Common myeloid progenitor, CD34-positive (primary cell): ENCODE measurements at regions of chr2 and their contacts with region 1.

Region 1: GRCh38 chr2:207166039-207166348 is 246 bp upstream of the KLF7 start:
- DNase-seq: peak; percentile 99 to 100 (median 100)
- H3K4me3 ChIP-seq: peak overlapping the region; percentile 78 to 94 (median 85)
- H3K27ac ChIP-seq: peak overlapping the region; percentile 93 to 99
- H3K4me1 ChIP-seq: peaks cover 39 to 59% (median 43%) of the 10 kb centered on the region in 4 experiments
- H3K27me3 ChIP-seq: no peaks in the 10 kb centered on the region

Region 2: DNA sequence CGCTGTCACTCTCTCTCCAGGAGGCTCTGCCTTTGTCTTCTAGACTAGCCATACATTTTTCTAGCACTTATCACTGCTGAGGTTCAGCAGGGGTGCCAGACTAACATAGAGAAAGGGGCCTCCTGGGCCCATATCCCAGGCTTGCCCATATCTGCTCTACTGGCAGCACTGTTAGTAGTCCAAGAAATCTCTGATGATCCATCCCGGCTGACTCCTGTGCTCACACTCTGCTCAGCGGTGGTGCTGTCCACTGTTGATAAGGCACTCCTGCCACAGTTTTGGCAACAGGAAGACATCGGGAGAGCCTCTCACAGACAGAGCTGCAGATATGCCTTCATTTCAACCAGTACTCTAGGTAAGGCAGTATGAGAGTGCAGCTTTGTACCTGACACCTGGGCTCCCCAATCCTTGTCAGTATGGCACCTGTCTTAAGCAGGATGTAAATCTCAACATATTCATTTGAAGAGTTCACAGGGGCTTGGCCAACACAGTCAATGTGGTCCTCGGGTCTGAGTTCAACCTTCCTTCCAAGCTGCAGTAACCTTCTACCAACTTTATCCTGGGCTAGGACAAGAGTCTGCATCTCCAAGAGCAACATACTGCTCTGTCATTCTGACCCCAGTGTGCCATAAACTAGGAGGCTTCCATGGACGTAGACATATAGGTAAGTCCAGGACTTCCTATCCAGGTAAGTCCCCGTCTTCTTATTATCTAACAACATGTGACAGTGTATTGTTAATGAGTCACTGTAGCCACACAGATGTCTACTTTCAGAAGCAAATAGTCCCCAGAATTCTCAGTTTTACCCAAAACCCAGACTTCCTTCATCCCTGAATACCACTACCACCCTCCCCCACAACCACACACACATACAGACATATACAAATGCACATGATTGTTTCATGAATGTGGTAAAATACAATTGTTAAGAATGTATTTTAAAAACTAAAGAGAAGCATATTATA is 16.5 kb before region 1 on chr2:
- CTCF ChIA-PET with region 1: interaction called, 12 read pairs
- POLR2A ChIA-PET with region 1: interaction called, 49 read pairs
- DNase-seq: peak in 2 of 3 donors; percentile 49 to 68
- H3K4me3 ChIP-seq: peak overlapping the region in 2 of 7 experiments; percentile 52 to 67
- H3K27ac ChIP-seq: peak overlapping the region; percentile 9 to 23
- H3K4me1 ChIP-seq: peaks cover 36 to 78% (median 63%) of the 10 kb centered on the region in 4 experiments
- H3K27me3 ChIP-seq: no peaks in the 10 kb centered on the region

Region 3: DNA sequence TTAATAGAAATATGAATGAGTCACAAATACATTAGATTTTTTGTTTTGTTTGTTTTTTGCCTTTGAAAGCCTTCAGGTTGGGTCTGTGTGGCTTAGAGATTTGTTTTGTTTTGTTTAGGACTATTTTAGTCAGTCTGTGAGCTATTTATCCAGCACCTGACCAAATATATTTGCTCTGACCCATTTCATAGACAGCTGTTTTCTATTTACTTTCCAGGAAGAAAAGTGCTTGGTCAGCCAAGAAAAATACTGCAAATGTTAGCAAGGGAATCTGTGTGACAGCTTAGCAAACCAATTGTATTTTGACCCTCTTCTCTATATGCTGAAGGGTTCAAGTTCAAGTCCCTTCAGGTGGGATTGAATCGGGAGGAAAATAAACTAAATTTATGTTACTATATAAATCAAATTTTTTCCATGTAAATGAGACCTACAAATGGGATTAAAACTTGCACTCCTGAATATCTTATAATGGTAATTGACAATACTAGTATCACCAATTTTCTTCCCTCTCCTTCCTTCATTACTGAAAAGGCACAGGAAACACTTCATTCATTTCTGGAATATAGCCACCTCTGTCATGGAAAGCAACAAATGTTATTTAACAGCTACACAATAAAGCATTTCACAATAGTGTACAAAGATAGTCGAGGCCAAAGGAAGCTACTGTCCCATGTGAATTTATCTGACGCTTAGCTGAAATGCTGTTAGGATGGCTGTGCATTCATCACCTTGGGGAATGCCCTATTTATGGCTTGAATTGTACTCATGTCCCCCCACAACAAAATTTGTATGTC is 22.8 kb after region 1 on chr2:
- CTCF ChIA-PET with region 1: no interaction called
- POLR2A ChIA-PET with region 1: no interaction called
- DNase-seq: no peak
- H3K4me3 ChIP-seq: no peak overlapping the region
- H3K27ac ChIP-seq: no peak overlapping the region
- H3K4me1 ChIP-seq: no peaks in the 10 kb centered on the region
- H3K27me3 ChIP-seq: no peaks in the 10 kb centered on the region

Region 4: DNA sequence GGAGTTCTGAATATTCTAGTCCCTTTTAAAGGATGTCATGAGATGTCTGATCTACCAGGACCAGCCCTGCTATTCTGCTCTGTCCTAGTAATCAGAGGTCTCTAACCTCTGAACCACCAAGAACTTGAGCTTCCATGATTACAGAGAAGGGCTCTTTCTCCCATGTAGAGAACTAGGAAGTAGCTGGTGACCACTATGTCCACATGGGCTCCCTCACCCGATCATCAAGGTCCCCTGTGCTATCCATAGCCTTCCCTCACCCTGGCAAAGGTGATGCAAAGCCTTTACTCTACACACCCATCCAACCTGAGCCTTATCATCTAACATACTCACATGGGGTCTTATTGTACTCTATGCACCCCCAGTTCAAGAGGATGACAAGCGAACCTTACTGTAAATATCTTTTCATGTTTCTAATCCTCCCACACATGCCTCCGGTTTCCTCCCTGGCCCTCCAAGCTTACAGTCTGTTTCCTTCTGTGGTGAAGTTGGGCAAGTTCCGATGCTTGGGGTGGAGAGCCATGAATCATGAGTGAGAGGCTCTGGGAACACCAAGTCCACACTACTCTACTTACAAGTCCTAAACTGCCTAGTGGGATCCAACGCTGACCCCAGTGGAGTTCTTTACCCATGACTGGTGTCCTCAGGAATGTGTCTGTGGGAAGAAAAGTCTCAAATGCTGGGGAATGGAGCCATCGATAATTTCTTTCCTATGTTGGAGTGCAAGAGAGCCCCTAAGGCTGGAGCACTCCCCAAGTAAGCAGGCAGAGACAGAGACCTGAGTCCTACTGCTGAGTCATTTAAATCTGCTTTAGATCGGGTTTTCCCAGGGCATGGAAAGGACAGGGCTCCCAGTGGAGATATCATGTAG is 73.1 kb after region 1 on chr2:
- CTCF ChIA-PET with region 1: interaction called, 8 read pairs
- POLR2A ChIA-PET with region 1: interaction called, 30 read pairs
- DNase-seq: peak; percentile 93 to 99 (median 99)
- H3K4me3 ChIP-seq: peak overlapping the region in 4 of 7 experiments; percentile 40 to 65 (median 55)
- H3K27ac ChIP-seq: peak overlapping the region in 1 of 2 experiments; percentile 50
- H3K4me1 ChIP-seq: peaks cover 24 to 71% (median 53%) of the 10 kb centered on the region in 4 experiments
- H3K27me3 ChIP-seq: no peaks in the 10 kb centered on the region

Region 5: DNA sequence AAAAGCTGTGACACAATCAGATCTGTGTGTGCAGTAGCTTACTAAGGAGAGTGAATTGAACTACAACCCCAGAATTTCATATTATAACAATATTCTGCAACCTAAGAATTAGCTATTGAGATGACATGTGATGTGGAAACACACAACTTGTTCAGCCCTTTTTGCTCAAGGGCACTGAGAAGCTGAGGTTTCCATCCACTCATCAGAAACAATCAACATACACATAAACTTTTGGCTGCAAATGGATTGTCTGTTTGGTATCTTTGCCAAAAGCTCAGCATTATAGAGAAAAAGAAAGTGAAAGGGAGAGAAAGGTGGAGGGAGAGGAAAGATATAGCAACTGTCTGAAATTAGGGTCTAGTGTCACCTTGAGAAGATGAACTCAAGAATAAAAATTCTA is 116.9 kb after region 1 on chr2:
- CTCF ChIA-PET with region 1: no interaction called
- POLR2A ChIA-PET with region 1: no interaction called
- DNase-seq: no peak
- H3K4me3 ChIP-seq: peak overlapping the region in 1 of 7 experiments; percentile 58
- H3K27ac ChIP-seq: peak overlapping the region in 1 of 2 experiments; percentile 58
- H3K4me1 ChIP-seq: peaks cover 4 to 32% (median 9%) of the 10 kb centered on the region in 4 experiments
- H3K27me3 ChIP-seq: no peaks in the 10 kb centered on the region